CD14-positive monocyte (primary cell): ENCODE measurements at regions of chr2 and their contacts with region 1.

Region 1: DNA sequence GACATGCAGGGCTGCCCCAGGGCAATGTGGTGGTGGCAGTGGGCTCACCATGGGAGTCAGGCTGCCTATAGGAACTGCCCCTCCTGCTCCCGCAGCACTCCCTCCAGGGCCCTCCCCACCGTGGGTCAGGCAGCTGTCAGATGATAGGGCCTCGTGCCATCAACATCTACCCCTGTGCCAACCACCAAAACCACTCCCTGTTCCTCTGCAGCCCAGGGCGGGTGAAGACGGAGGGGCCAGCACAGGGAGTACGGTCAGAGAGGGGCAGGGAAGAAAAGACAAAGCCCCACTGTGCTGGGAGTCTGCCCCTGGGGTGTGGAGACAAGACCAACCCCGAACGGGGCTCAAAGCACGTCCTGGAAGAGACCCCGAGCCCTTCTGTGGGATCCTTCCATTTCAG is 97.4 kb downstream of the TNS1 start:
- DNase-seq: peak; percentile 27 to 44 (median 33)
- H3K4me3 ChIP-seq: no peak overlapping the region
- H3K4me3 Mint-ChIP-seq: no peak overlapping the region
- H3K27ac ChIP-seq: no peak overlapping the region
- H3K27ac Mint-ChIP-seq: peak overlapping the region in 3 of 7 donors; percentile 59 to 85 (median 82)
- H3K4me1 ChIP-seq: peaks cover 38 to 47% of the 10 kb centered on the region in 2 donors
- H3K4me1 Mint-ChIP-seq: peaks cover 53% of the 10 kb centered on the region
- H3K27me3 ChIP-seq: peaks cover 0 to 2% of the 10 kb centered on the region in 2 donors
- H3K27me3 Mint-ChIP-seq: peaks cover 0 to 18% (median 9%) of the 10 kb centered on the region in 3 donors
- CTCF ChIP-seq: no peak

Region 2: DNA sequence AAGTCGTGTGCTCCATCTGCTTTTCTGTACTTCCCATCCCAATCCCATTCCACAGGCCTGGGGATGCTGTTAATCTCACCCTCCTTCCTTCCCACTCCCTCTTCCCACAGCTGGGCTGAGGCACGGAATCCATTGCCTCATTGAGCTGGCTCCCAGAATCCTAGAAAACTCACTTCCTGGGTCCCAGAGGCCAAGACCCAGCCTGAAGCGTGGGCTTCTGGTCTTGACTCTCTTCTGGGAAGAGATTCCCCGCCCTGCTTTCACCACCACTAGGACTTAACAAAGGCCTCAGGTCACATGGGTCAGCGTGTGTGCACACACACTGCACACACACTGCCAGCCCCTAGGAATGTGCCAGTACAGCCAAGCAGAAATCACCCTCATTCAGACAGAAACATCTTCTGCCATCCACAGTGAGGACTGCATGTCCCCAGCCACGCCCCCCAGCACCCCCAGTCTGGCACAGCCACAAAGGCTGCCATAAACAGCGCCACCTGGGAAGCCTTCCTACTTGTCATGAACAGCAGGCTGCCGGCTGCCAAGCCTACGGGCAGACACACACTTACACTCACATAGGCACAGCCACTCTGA is 68.4 kb before region 1 on chr2:
- intact Hi-C with region 1: no loop called
- DNase-seq: no peak
- H3K4me3 ChIP-seq: no peak overlapping the region
- H3K4me3 Mint-ChIP-seq: no peak overlapping the region
- H3K27ac ChIP-seq: no peak overlapping the region
- H3K27ac Mint-ChIP-seq: peak overlapping the region in 1 of 7 donors; percentile 8
- H3K4me1 ChIP-seq: peaks cover 14 to 21% of the 10 kb centered on the region in 2 donors
- H3K4me1 Mint-ChIP-seq: peaks cover 19% of the 10 kb centered on the region
- H3K27me3 ChIP-seq: no peaks in the 10 kb centered on the region
- H3K27me3 Mint-ChIP-seq: peaks cover 0 to 3% (median 2%) of the 10 kb centered on the region in 3 donors
- CTCF ChIP-seq: no peak

Region 3: GRCh38 chr2:217947383-217948350 is 42.3 kb after region 1 on chr2:
- intact Hi-C with region 1: loop called in 1 of 2 experiments (anchors 5 kb)
- DNase-seq: no peak
- H3K4me3 ChIP-seq: no peak overlapping the region
- H3K4me3 Mint-ChIP-seq: no peak overlapping the region
- H3K27ac ChIP-seq: no peak overlapping the region
- H3K27ac Mint-ChIP-seq: peak overlapping the region in 1 of 7 donors; percentile 19
- H3K4me1 ChIP-seq: peaks cover 17 to 23% of the 10 kb centered on the region in 2 donors
- H3K4me1 Mint-ChIP-seq: peaks cover 23% of the 10 kb centered on the region
- H3K27me3 ChIP-seq: no peaks in the 10 kb centered on the region
- H3K27me3 Mint-ChIP-seq: peaks cover 0 to 4% (median 1%) of the 10 kb centered on the region in 3 donors
- CTCF ChIP-seq: no peak